HepG2 (cell line): ENCODE measurements at regions of chr12 and their contacts with region 1.

Region 1: GRCh38 chr12:56266693-56267442 is at the start of gene COQ10A:
- DNase-seq: peak; percentile 83
- ATAC-seq: peak; percentile 90
- H3K4me3 ChIP-seq: peak within 1 kb of the TSS; percentile 54 to 91 (median 83)
- H3K27ac ChIP-seq: peak within 1 kb of the TSS; percentile 82
- H3K4me1 ChIP-seq: peaks cover 18% of the 10 kb centered on the region
- H3K27me3 ChIP-seq: no peaks in the 10 kb centered on the region; a peak in 1 of 5 replicates
- CTCF ChIP-seq: peak; percentile 89
- EP300 ChIP-seq: no peak
- POLR2A ChIP-seq: peak; percentile 90 to 92
- RAD21 ChIP-seq: peak; percentile 62
- total RNA-seq, gene COQ10A: 18.6 and 21.0 TPM in 2 replicates

Region 2: GRCh38 chr12:56230432-56231183 is 36.3 kb before region 1 on chr12:
- CTCF ChIA-PET with region 1: interaction called, 3 read pairs
- POLR2A ChIA-PET with region 1: interaction called, 16 read pairs
- in situ Hi-C with region 1: no loop called
- intact Hi-C with region 1: no loop called
- DNase-seq: peak; percentile 93
- ATAC-seq: peak; percentile 96
- H3K4me3 ChIP-seq: peak overlapping the region; percentile 62 to 86 (median 78)
- H3K27ac ChIP-seq: peak overlapping the region; percentile 99
- H3K4me1 ChIP-seq: peaks cover 37% of the 10 kb centered on the region
- H3K27me3 ChIP-seq: no peaks in the 10 kb centered on the region
- CTCF ChIP-seq: no peak
- EP300 ChIP-seq: 0 out of 4 replicates have a peak, but pooled peaks of 1 of the 2 experiments have one; percentile 32
- POLR2A ChIP-seq: peak; percentile 71 to 85; a peak in 3 of 4 replicates
- RAD21 ChIP-seq: no peak

Region 3: GRCh38 chr12:56286044-56286830 is 19.4 kb after region 1 on chr12:
- CTCF ChIA-PET with region 1: no interaction called
- POLR2A ChIA-PET with region 1: interaction called, 15 read pairs
- in situ Hi-C with region 1: no loop called
- intact Hi-C with region 1: loop called (anchors 2 kb)
- DNase-seq: no peak
- ATAC-seq: no peak
- H3K4me3 ChIP-seq: no peak overlapping the region
- H3K27ac ChIP-seq: peak overlapping the region; percentile 30
- H3K4me1 ChIP-seq: peaks cover 53% of the 10 kb centered on the region
- H3K27me3 ChIP-seq: no peaks in the 10 kb centered on the region
- CTCF ChIP-seq: no peak
- EP300 ChIP-seq: no peak
- POLR2A ChIP-seq: no peak
- RAD21 ChIP-seq: no peak

Region 4: DNA sequence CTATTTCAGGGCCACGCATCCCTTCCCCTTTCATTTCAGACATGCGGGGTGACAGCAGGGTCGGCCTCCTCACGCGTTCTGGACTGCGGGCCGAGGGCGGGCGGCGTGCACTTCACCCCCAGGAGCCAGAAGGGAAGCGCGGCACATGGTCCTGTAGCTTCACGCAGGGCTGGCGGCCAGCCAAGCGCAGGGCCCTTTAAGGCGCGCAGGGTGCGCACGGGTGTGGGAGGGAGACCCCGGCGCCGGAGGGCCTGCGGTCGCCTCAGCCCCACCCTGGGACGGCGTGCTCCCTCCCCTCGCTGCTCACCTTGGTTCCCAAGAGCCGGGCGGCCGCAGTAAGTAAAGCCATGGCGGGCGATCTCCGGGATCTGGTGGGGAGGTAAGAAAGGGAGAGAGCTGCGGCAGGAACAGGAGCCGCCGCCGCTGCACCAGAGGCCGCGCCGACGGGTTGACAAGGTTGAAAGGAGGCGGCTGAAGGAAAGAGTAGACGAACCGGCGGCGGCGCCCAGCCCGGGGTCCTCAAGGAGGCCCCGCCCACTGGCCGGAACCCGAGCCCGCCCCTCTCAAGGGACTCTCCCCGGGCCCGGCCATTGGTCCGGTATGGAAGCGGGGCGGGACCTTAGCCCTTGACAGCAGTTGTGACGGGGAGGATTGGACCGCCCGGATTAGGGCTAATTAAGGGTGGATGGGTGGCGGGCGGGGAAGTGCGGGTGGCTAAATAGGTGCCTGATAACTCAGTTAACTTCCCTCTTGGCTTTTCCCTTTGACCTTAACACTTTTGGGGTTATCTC is 33.2 kb after region 1 on chr12 and contains the start of gene CS:
- CTCF ChIA-PET with region 1: no interaction called
- POLR2A ChIA-PET with region 1: interaction called, 16 read pairs
- in situ Hi-C with region 1: no loop called
- intact Hi-C with region 1: no loop called
- DNase-seq: peak; percentile 96
- ATAC-seq: peak; percentile 87
- H3K4me3 ChIP-seq: peak within 1 kb of the TSS; percentile 76 to 97 (median 94)
- H3K27ac ChIP-seq: peak within 1 kb of the TSS; percentile 96
- H3K4me1 ChIP-seq: peaks cover 65% of the 10 kb centered on the region
- H3K27me3 ChIP-seq: no peaks in the 10 kb centered on the region; a peak in 1 of 5 replicates
- CTCF ChIP-seq: 0 out of 2 replicates have a peak, but pooled peaks have one; percentile 7
- EP300 ChIP-seq: 0 out of 4 replicates have a peak, but pooled peaks of 1 of the 2 experiments have one; percentile 26
- POLR2A ChIP-seq: peak; percentile 54 to 70
- RAD21 ChIP-seq: peak; percentile 59
- total RNA-seq, gene CS: 175 and 243 TPM in 2 replicates